Mammary epithelial cell (primary cell): ENCODE measurements at regions of chr4 and their contacts with region 1.

Region 1: DNA sequence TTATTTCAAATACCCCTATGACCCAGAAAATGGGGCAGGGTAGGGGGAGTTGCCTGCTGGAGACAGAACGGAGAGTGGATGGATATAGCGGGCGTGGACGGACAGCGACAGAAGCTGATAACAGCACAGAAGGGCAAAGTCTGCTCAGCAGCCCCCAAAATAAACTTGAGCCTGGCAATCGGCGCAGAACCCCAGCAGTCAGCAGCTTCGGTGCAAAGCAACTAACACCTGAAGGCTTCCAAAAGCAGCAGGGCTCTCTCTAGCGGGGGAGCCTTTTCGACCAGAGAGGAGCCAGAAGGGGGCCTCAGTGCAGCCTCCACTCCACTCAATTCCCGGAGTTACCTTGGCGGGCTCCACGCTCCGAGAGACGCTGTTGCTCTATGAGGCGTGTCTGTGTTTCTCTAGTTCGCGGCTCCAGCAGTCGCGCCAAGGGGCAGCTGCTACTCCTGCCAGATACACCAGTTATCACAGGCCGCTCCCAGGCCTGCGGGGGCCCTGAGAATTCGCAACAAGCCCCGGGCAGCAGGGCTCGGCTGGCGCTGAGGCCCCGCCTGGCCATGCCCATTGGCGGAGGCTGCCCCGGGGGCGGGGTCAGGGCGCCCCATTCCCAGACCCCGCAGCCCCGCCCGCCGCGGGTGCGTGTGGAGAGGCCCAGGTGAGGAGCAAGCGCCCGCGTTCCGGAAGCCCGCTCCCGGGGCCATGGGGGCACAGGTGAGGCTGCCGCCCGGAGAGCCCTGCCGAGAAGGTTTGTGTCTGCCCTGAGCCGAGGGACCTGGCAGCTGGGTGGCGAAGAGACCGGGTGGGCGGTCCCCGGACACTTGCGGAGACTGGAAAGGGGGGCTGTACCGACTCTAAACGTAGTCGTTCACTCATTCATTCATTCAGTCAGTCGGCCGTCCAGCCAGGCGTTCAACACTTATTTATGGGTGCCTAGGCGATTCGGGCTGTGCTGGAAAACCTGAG is at the starts of genes CNGA1 and NIPAL1:
- DNase-seq: peak; percentile 94
- H3K4me3 ChIP-seq: peak within 1 kb of the TSS; percentile 73 to 86 (median 75)
- H3K27ac ChIP-seq: peak within 1 kb of the TSS; percentile 99
- H3K4me1 ChIP-seq: peaks cover 9% of the 10 kb centered on the region
- H3K27me3 ChIP-seq: no peaks in the 10 kb centered on the region
- CTCF ChIP-seq: peak; percentile 9 to 42
- total RNA-seq, gene CNGA1: 0.12 to 0.17 TPM
- total RNA-seq, gene NIPAL1: 11.7 to 19.9 TPM

Region 2: DNA sequence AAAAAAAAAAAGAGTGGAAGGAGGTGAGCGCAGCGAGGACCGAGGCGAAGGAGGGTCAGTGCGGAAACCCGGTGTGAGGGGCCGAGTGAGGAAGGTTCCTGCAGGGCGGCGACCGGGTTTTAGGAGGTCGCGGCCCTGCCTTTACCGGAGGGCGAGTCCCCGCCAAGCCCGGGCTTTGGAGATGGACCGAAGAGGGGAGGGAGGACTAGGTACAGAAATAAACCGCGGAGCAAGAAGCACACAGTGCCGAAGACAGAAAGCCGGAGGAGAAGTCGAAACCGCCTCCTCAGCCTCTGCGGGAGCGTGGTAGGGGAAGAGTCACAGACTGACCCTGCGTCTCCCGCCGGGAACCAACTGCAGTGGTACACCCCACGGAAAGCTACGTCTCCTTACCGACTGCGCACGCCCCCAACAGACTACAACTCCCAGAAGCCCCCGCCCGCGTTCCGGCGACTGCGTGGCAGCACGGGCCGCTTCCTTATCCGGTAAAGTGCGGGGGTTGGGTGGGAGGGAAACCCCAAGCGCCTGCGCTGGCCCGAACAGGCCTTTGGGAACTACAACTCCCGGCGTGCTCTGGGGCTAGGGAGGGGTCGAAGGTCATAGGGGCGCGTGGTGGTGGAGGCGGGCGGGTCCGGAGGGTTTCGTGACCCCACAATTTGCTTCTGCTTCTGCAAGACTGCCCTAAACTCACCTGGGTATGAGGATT is 102.0 kb before region 1 on chr4 and contains the start of gene NFXL1:
- CTCF ChIA-PET with region 1: no interaction called
- dilution Hi-C with region 1: no loop called
- in situ Hi-C with region 1: no loop called
- intact Hi-C with region 1: loop called (anchors 1 kb)
- DNase-seq: peak; percentile 96
- H3K4me3 ChIP-seq: peak within 1 kb of the TSS; percentile 80 to 90 (median 88)
- H3K27ac ChIP-seq: peak within 1 kb of the TSS; percentile 77
- H3K4me1 ChIP-seq: peaks cover 13% of the 10 kb centered on the region
- H3K27me3 ChIP-seq: no peaks in the 10 kb centered on the region
- CTCF ChIP-seq: no peak
- total RNA-seq, gene NFXL1: 15.8 to 20.9 TPM

Region 3: DNA sequence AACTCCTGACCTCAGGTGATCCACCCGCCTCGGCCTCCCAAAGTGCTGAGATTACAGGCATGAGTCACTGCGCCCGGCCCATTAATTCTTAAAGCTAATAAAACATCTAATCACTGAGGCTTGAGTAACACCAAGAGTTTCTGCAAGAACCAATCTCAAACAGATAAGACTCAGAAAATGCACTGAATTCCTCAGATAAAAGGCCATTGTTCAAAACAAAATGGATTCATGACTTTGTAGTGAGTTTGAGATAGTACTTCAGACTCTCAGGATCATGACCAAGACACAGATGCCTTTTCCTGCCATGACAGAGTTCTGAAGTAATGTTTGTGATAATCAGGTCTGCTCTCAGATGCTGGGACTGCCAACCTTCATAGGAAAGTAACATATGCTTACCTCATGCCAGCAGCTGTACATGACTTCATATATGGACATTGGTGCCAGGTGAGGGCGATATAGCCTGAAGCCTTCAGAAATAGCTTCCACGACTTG is 54.7 kb after region 1 on chr4:
- CTCF ChIA-PET with region 1: no interaction called
- dilution Hi-C with region 1: no loop called
- in situ Hi-C with region 1: no loop called
- intact Hi-C with region 1: no loop called
- DNase-seq: peak; percentile 25
- H3K4me3 ChIP-seq: no peak overlapping the region
- H3K27ac ChIP-seq: no peak overlapping the region
- H3K4me1 ChIP-seq: no peaks in the 10 kb centered on the region
- H3K27me3 ChIP-seq: no peaks in the 10 kb centered on the region
- CTCF ChIP-seq: no peak

Region 4: DNA sequence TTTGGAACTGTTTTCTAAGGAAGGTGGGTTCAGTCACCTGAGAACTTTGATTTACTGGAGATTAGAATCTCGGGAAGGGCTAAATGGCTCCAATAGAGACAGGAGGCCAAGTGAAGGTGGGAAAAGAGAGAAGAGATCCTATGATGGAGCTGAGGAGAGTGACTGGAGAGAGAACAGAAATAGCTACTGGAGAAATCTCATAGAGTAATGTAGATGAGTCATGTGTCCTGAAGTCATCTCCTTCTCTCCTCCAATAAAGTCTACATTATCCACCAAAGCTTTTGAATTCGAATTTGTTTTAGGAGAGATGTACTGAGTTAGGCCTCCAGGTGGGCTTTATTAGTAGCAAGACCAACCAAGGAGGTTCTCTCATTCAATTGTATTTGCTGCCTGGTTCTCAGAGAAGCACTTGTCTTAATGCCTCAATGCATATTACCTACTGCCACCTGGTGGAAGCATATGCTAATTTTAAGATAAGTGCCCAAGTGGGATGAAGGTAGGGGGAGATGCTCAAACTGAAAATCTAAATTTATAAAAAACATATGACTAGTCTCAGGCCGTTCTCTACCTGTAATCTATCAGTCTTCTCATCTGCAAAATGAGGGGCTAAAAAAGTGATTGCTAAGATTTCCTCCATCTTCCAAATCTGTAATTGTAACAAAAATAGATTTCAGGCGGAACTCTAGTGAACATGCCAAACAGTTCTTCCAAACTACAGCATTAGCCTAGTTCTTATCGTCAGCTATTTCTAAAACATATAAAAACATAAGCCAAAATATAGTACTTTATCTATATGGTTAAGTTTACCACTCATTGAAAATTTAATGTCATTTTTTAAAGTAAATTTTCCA is 93.2 kb after region 1 on chr4:
- CTCF ChIA-PET with region 1: no interaction called
- dilution Hi-C with region 1: no loop called
- in situ Hi-C with region 1: loop called in 1 of 2 experiments (anchors 25 kb)
- intact Hi-C with region 1: no loop called
- DNase-seq: peak; percentile 54
- H3K4me3 ChIP-seq: no peak overlapping the region
- H3K27ac ChIP-seq: no peak overlapping the region
- H3K4me1 ChIP-seq: peaks cover 11% of the 10 kb centered on the region
- H3K27me3 ChIP-seq: no peaks in the 10 kb centered on the region
- CTCF ChIP-seq: peak; percentile 66 to 82

Region 5: DNA sequence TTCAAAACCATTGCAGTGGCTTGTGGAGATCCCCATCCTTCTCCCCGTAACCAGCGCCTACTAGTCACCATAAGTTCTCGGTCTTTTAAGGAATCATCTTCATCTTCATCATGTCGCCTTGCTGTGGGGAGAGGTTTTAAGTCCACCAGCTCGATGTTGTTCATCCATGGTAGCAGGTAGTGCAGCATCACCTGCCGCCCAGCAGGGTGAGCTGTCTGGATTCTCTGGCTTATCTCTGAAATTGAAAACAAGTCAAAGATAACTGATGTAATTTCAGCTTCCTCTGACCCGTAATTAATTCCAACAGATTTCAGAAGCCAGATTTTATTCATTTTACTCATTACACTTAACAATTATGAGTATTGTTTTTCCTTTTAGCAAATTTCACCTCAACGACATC is 541.1 kb after region 1 on chr4:
- CTCF ChIA-PET with region 1: no interaction called
- dilution Hi-C with region 1: no loop called
- in situ Hi-C with region 1: no loop called
- intact Hi-C with region 1: no loop called
- DNase-seq: no peak
- H3K4me3 ChIP-seq: no peak overlapping the region
- H3K27ac ChIP-seq: no peak overlapping the region
- H3K4me1 ChIP-seq: no peaks in the 10 kb centered on the region
- H3K27me3 ChIP-seq: no peaks in the 10 kb centered on the region
- CTCF ChIP-seq: peak; percentile 18 to 25